SK-N-SH (cell line): ENCODE measurements at regions of chr20 and their contacts with region 1.

Region 1: DNA sequence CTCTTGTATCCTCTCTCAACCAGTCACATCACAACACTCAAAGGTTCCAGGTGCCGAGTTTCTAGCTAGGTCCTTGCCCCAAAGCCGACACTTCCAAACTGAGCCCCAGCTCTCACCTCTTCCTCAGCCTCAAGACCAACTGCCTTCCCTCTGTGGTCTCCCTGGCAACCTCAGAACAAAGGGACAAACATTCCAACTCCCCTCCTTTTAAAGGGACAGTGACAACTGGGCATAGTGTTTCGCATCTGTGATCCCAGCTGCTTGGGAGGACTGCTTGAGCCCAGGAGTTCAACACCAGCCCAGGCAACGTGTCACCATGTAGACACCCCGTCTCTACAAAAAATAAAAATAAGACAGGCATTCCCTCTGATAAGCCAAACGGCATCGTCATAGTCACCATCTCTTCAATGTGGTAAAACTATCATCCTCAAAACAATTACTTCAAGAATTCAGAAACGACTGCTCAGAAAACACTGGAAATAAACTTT is 11.3 kb downstream of the DIDO1 start:
- DNase-seq: peak; percentile 49
- H3K4me3 ChIP-seq: no peak overlapping the region
- H3K27ac ChIP-seq: no peak overlapping the region
- H3K4me1 ChIP-seq: peaks cover 0 to 13% of the 10 kb centered on the region in 2 experiments; a peak in 2 of 4 replicates
- H3K27me3 ChIP-seq: no peaks in the 10 kb centered on the region
- CTCF ChIP-seq: no peak
- EP300 ChIP-seq: no peak
- RAD21 ChIP-seq: no peak

Region 2: DNA sequence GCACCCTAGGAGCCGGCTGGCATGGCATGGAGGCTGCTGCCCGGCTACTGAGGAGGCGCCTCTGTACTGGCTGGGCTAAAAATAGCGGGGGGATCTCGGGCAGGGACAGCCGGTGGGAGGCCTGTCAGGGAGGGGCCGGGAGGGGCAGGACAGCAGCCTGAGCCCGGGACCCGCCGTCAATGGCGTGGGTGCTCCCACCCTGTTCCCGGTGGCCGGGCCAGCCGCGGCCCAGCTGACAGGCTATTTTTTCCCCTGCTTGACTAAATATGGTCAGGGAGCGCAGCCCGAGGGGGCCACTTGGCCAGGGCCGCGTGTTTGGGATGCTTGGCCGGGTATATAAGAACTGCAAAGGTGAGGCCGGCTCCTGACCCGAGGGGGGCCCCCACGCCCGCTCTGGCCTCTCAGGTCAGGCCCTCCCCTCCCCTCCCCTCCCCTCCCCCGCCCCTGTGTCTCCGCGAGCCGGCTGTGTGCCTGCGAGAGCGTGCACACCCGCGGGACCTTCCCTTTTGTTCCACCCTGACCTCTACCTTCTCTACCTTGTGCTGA is 364.9 kb before region 1 on chr20:
- CTCF ChIA-PET with region 1: no interaction called
- POLR2A ChIA-PET with region 1: no interaction called
- DNase-seq: no peak
- H3K4me3 ChIP-seq: no peak overlapping the region
- H3K27ac ChIP-seq: no peak overlapping the region
- H3K4me1 ChIP-seq: peaks cover 0 to 25% of the 10 kb centered on the region in 2 experiments; a peak in 1 of 4 replicates
- H3K27me3 ChIP-seq: peaks cover 27% of the 10 kb centered on the region
- CTCF ChIP-seq: no peak
- EP300 ChIP-seq: no peak
- RAD21 ChIP-seq: no peak

Region 3: GRCh38 chr20:62590301-62591121 is 324.5 kb before region 1 on chr20:
- CTCF ChIA-PET with region 1: no interaction called
- POLR2A ChIA-PET with region 1: no interaction called
- DNase-seq: no peak
- H3K4me3 ChIP-seq: no peak overlapping the region
- H3K27ac ChIP-seq: no peak overlapping the region
- H3K4me1 ChIP-seq: no peaks in the 10 kb centered on the region; a peak in 1 of 4 replicates
- H3K27me3 ChIP-seq: no peaks in the 10 kb centered on the region
- CTCF ChIP-seq: no peak
- EP300 ChIP-seq: no peak
- RAD21 ChIP-seq: no peak

Region 4: DNA sequence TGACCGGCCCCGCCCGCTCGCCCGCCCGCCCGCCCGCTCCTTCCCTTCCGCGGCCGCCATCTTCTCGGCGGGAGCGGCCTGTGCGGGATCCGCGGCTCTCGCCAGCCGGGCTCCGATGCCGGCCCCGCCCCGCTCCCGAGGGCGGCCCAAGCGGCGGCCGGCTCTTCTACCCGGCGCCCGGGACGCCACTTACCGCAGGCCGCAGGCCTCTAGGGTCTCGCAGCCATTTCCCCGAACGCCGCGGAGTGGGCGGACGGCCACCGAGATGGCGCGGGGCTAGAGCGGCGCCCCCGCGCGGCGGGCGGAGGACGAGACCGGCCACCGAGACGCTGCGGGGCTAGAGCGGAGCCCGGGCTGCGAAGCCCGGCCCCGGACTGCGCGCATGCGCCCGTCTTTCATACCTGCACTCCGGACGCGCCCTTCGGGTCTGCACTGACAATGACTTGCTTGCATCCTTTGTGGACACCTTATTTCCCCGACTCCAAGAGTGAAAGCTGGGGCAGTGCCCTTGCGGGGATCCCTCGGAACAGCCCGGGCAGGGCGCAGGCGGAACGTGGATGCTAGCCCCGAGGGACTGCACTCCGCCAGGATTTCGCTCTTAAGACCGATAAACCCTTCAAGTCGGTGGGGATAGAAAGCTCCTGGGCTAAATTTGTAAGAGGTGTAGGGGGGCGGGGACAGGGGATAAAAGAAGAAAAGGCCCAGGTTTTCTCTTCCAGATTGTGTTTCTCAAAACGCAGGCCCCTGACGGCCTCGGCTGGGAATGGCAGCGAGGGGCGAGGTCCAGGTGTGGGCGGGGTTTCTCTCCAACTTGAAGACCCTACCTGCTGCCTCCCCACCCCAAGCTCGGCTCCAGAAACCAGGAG is 11.5 kb after region 1 on chr20 and contains the start of gene DIDO1:
- CTCF ChIA-PET with region 1: interaction called, 127 read pairs
- POLR2A ChIA-PET with region 1: no interaction called
- DNase-seq: peak; percentile 99
- H3K4me3 ChIP-seq: peak within 1 kb of the TSS; percentile 86 to 95
- H3K27ac ChIP-seq: peak within 1 kb of the TSS; percentile 86 to 88
- H3K4me1 ChIP-seq: peaks cover 15 to 27% of the 10 kb centered on the region in 2 experiments; a peak in 3 of 4 replicates
- H3K27me3 ChIP-seq: no peaks in the 10 kb centered on the region
- CTCF ChIP-seq: peak; percentile 56
- EP300 ChIP-seq: no peak
- RAD21 ChIP-seq: no peak
- polyA plus RNA-seq, gene DIDO1: 14.7 and 15.6 TPM in 2 replicates